Activated CD4-positive, alpha-beta T cell treated with anti-CD3 and anti-CD28 coated beads, Interleukin-2, amount 10 ng/mL, durations not matched to agents 24 days and 14 days (primary cell): ENCODE measurements at regions of chr17 and their contacts with region 1.

Region 1: DNA sequence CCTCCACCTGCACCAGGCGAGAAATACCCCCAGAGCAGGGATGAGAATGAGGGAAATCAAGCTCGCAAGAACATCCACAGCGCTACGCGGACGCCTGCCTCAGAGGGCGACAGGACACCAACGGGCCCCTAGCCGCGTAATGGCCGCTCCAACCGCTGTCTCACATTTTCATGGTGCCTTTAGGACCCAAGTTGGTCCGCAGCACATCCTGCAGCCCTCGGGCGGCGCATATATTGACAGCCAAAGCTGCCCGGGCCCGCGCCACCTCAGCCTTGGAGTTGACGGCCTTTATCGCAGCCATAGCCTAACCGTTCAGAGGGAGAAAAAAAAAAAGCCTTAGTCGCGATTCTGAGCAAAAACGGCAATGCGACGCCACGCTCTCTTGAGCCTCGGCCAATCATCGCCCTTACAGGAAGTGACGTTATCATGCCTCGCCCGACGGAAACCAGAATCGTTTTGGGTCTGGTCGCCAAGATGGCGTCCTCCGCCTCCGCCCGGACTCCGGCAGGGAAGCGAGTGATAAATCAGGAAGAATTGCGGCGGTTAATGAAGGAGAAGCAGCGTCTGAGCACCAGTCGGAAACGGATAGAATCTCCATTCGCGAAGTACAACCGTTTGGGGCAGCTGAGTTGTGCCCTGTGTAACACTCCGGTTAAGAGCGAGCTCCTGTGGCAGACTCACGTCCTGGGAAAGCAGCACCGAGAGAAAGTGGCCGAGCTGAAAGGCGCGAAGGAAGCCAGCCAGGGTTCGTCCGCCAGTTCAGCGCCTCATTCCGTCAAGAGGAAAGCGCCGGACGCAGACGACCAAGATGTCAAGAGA is at the starts of genes CCT6B and ZNF830:
- DNase-seq: peak; percentile 97
- H3K4me3 Mint-ChIP-seq: peak within 1 kb of the TSS; percentile 98
- H3K27ac Mint-ChIP-seq: peak within 1 kb of the TSS; percentile 100
- H3K4me1 Mint-ChIP-seq: peaks cover 24% of the 10 kb centered on the region
- H3K27me3 Mint-ChIP-seq: peaks cover 2% of the 10 kb centered on the region
- total RNA-seq, gene CCT6B: 0.40 and 1.3 TPM in 2 replicates
- total RNA-seq, gene ZNF830: 24.7 and 28.4 TPM in 2 replicates

Region 2: DNA sequence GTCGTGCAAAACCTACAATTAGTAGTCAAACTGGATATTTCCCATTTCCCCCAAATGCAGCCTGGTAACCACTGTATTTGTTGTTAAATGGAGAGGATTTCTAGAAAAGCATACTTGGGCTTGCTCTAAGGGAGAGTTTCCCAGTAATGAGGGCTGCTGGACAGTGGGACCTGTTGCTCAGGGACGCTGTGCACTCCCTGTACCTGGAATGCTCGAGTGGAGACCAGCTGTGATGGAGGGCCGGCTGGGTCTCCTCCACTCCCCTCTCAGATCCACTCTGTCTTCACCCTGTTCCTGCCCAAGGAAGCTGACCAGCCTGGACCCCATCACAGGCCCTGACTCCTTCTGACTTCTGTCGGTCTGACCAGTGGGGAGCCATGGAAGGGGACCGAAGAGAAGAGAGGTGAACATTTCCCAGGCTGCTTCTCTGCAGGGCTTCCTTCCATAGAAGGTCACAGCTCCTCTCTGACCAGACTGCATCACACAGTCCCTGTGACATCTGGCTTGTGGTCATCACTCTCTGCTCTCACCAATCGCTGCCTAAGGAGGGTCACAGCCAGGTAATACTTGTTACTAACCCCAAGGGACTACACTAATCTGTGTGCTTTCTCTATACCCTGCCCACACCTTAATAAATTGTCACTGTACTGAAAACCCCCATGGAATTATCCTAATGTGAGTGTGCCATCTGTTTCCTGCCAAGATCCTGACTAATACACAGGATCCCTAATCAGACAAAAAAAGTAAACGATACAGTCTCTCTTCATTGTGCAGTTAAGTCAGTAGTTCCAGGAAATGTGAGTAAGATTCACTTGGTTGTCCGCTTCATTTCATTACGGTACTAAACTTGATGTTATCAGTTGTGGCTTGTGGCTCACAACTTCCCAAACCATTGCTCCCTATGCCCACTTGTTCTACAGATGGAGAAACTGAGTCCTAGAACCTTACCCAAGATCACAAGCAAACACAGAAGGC is 102.4 kb before region 1 on chr17:
- intact Hi-C with region 1: no loop called
- DNase-seq: no peak
- H3K4me3 Mint-ChIP-seq: no peak overlapping the region
- H3K27ac Mint-ChIP-seq: no peak overlapping the region
- H3K4me1 Mint-ChIP-seq: peaks cover 10% of the 10 kb centered on the region
- H3K27me3 Mint-ChIP-seq: peaks cover 6% of the 10 kb centered on the region

Region 3: GRCh38 chr17:34980681-34981537 is 19.6 kb after region 1 on chr17:
- intact Hi-C with region 1: loop called (anchors 1 kb)
- DNase-seq: peak; percentile 95
- H3K4me3 Mint-ChIP-seq: peak overlapping the region; percentile 96
- H3K27ac Mint-ChIP-seq: peak overlapping the region; percentile 96
- H3K4me1 Mint-ChIP-seq: peaks cover 47% of the 10 kb centered on the region
- H3K27me3 Mint-ChIP-seq: no peaks in the 10 kb centered on the region